WTC11 (cell line): ENCODE measurements at regions of chr15 and their contacts with region 1.

Region 1: GRCh38 chr15:73972984-73973682 is 19.0 kb downstream of the STOML1 start:
- DNase-seq: peak; percentile 90
- ATAC-seq: peak; percentile 93
- H3K4me3 Mint-ChIP-seq: peak overlapping the region; percentile 48
- H3K27ac Mint-ChIP-seq: no peak overlapping the region
- H3K4me1 Mint-ChIP-seq: peaks cover 13% of the 10 kb centered on the region
- H3K27me3 Mint-ChIP-seq: peaks cover 15% of the 10 kb centered on the region
- CTCF ChIP-seq: peak; percentile 31; the same call in 1 of the 2 replicates

Region 2: GRCh38 chr15:73717802-73718201 is 255.3 kb before region 1 on chr15:
- CTCF ChIA-PET with region 1: no interaction called
- POLR2A ChIA-PET with region 1: no interaction called
- DNase-seq: peak; percentile 49
- ATAC-seq: peak; percentile 62; the same call in 1 of the 2 replicates
- H3K4me3 Mint-ChIP-seq: no peak overlapping the region
- H3K27ac Mint-ChIP-seq: no peak overlapping the region
- H3K4me1 Mint-ChIP-seq: no peaks in the 10 kb centered on the region
- H3K27me3 Mint-ChIP-seq: no peaks in the 10 kb centered on the region; the same call in 1 of the 2 replicates
- CTCF ChIP-seq: peak; percentile 41

Region 3: DNA sequence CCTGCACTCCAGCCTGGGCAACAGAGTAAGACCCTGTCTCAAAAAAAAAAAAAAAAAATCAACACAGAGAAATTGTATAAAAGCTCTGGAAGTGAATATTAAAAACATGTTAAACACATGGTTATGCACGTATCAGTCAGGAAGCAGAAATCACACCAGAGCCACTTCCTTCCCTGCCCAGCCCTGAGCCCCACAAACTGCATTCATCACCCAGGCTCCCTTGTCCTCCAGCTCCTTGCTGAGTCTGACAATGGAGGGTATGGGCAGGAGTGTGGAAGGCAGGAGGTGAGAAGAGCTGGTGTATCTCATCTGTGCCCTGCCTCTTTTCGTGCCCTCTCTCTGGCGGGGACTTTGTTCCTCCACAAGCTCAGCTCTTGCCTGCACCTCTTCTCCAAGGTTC is 59.0 kb before region 1 on chr15:
- CTCF ChIA-PET with region 1: no interaction called
- POLR2A ChIA-PET with region 1: no interaction called
- DNase-seq: no peak
- ATAC-seq: no peak
- H3K4me3 Mint-ChIP-seq: no peak overlapping the region
- H3K27ac Mint-ChIP-seq: no peak overlapping the region
- H3K4me1 Mint-ChIP-seq: peaks cover 5% of the 10 kb centered on the region; the same call in 1 of the 2 replicates
- H3K27me3 Mint-ChIP-seq: no peaks in the 10 kb centered on the region
- CTCF ChIP-seq: no peak

Region 4: GRCh38 chr15:73936181-73936580 is 37.0 kb before region 1 on chr15:
- CTCF ChIA-PET with region 1: interaction called, 12 read pairs
- POLR2A ChIA-PET with region 1: no interaction called
- DNase-seq: no peak
- ATAC-seq: peak; percentile 33; the same call in 1 of the 2 replicates
- H3K4me3 Mint-ChIP-seq: no peak overlapping the region
- H3K27ac Mint-ChIP-seq: no peak overlapping the region
- H3K4me1 Mint-ChIP-seq: peaks cover 14% of the 10 kb centered on the region
- H3K27me3 Mint-ChIP-seq: no peaks in the 10 kb centered on the region
- CTCF ChIP-seq: no peak

Region 5: GRCh38 chr15:74010929-74011540 is 37.9 kb after region 1 on chr15:
- CTCF ChIA-PET with region 1: interaction called, 13 read pairs
- POLR2A ChIA-PET with region 1: no interaction called
- DNase-seq: no peak
- ATAC-seq: no peak
- H3K4me3 Mint-ChIP-seq: no peak overlapping the region
- H3K27ac Mint-ChIP-seq: no peak overlapping the region; the same call in 1 of the 2 replicates
- H3K4me1 Mint-ChIP-seq: peaks cover 7% of the 10 kb centered on the region; the same call in 1 of the 2 replicates
- H3K27me3 Mint-ChIP-seq: no peaks in the 10 kb centered on the region
- CTCF ChIP-seq: no peak

Region 6: DNA sequence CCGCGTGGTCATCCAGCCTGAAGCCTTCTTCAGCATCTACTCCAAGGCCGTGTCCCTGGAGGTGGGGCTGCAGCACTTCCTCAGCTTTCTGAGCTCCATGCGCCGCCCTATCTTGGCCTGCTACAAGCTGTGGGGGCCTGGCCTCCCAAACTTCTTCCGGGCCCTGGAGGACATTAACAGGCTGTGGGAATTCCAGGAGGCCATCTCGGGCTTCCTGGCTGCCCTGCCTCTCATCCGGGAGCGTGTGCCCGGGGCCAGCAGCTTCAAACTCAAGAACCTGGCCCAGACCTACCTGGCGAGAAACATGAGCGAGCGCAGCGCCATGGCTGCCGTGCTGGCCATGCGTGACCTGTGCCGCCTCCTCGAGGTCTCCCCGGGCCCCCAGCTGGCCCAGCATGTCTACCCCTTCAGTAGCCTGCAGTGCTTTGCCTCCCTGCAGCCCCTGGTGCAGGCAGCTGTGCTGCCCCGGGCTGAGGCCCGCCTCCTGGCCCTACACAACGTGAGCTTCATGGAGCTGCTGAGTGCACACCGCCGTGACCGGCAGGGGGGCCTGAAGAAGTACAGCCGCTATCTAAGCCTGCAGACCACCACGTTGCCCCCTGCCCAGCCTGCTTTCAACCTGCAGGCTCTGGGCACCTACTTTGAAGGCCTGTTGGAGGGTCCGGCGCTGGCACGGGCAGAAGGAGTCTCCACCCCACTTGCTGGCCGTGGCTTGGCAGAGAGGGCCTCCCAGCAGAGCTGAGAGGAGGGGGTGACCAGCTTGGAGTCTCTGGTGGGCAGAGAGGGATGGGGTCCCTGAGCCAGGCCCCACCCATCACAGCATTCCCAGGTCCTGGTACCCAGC is 71.4 kb after region 1 on chr15:
- CTCF ChIA-PET with region 1: interaction called, 290 read pairs
- POLR2A ChIA-PET with region 1: no interaction called
- DNase-seq: no peak
- ATAC-seq: no peak
- H3K4me3 Mint-ChIP-seq: no peak overlapping the region
- H3K27ac Mint-ChIP-seq: no peak overlapping the region
- H3K4me1 Mint-ChIP-seq: peaks cover 21% of the 10 kb centered on the region
- H3K27me3 Mint-ChIP-seq: peaks cover 6% of the 10 kb centered on the region; the same call in 1 of the 2 replicates
- CTCF ChIP-seq: no peak

Region 7: DNA sequence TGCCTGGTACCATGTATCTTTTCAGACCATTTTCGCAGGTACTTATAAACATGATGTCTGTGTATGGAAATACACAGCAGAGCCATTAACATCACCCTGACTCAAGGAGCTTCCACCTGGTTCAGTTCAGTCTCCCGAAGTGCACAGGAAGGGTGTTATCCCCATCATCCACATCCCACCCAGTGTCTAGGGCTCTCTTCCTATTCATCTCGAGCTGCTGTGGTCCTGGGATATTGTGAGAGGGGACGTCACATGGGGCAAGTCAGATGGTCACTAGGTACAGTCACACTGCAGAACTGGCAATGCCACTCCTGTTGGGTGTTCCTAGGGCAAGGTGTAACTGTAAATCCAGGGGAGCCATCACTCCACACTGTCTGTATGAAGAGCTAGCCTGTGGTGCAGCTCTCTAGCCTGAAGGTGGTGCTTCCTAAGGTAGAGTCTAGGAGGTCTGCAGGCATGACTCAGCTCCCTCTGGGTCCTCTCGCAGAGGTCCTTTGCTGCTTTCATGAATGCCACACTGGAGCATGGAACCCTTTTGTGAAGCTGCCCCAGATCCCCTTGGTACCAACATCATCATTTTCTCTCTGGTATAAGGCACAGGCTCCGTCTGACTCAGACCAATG is 171.1 kb after region 1 on chr15:
- CTCF ChIA-PET with region 1: interaction called, 10 read pairs
- POLR2A ChIA-PET with region 1: no interaction called
- DNase-seq: no peak
- ATAC-seq: peak; percentile 92
- H3K4me3 Mint-ChIP-seq: no peak overlapping the region
- H3K27ac Mint-ChIP-seq: no peak overlapping the region
- H3K4me1 Mint-ChIP-seq: peaks cover 29% of the 10 kb centered on the region
- H3K27me3 Mint-ChIP-seq: peaks cover 10% of the 10 kb centered on the region
- CTCF ChIP-seq: no peak